Natural killer cell (primary cell): ENCODE measurements at regions of chr10 and their contacts with region 1.

Region 1: DNA sequence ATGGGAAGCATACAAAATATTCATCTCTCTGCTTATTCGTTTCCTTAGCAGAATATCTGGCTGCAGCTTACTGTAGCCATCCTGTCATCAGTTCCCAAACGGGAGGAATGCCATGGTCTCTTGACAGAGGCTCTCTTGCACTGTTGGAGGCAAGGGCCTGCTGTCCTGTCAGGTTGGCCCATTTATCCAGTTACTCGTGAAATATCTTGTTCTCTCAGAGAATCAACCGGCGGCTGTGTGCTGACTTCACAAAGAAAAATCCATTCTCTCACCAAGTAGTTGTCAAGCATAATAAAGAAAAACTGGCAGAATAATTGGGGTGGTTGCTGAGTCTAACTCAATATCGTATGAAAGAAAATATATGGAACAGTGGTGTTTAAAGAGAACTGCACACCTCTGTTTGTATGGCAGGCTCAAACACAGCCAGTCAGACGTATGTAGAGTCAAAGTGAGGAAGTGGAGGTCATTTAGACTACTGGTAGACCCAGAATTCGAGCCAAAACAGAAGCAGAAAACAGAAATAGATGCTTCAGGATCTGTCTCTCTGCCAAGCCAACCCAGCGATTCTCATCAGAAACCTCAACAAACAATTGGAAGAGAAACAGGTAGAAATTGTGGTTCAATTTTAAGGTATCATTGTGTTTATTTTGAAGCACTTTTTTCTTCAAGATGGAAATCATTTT is 349.2 kb upstream of the PRKCQ start:
- DNase-seq: peak in 1 of 2 donors; percentile 45
- ATAC-seq: no peak
- H3K4me3 ChIP-seq: no peak overlapping the region
- H3K4me3 Mint-ChIP-seq: peak overlapping the region; percentile 87
- H3K27ac ChIP-seq: peak overlapping the region; percentile 91
- H3K27ac Mint-ChIP-seq: peak overlapping the region; percentile 96 to 98
- H3K4me1 ChIP-seq: peaks cover 37% of the 10 kb centered on the region
- H3K4me1 Mint-ChIP-seq: peaks cover 54 to 64% of the 10 kb centered on the region in 2 donors
- H3K27me3 ChIP-seq: no peaks in the 10 kb centered on the region
- H3K27me3 Mint-ChIP-seq: no peaks in the 10 kb centered on the region
- CTCF ChIP-seq: no peak

Region 2: GRCh38 chr10:6973899-6974298 is 44.6 kb after region 1 on chr10:
- intact Hi-C with region 1: loop called (anchors 5 kb)
- DNase-seq: peak; percentile 24 to 59
- ATAC-seq: peak; percentile 89 to 97 (median 89)
- H3K4me3 ChIP-seq: no peak overlapping the region
- H3K4me3 Mint-ChIP-seq: peak overlapping the region; percentile 66
- H3K27ac ChIP-seq: peak overlapping the region; percentile 39
- H3K27ac Mint-ChIP-seq: peak overlapping the region; percentile 70 to 72
- H3K4me1 ChIP-seq: peaks cover 13% of the 10 kb centered on the region
- H3K4me1 Mint-ChIP-seq: peaks cover 47 to 57% of the 10 kb centered on the region in 2 donors
- H3K27me3 ChIP-seq: no peaks in the 10 kb centered on the region
- H3K27me3 Mint-ChIP-seq: no peaks in the 10 kb centered on the region
- CTCF ChIP-seq: no peak

Region 3: GRCh38 chr10:7027913-7028808 is 98.9 kb after region 1 on chr10:
- intact Hi-C with region 1: loop called (anchors 1 kb)
- DNase-seq: peak in 1 of 2 donors; percentile 32
- ATAC-seq: peak in 2 of 3 donors; percentile 15 to 48
- H3K4me3 ChIP-seq: no peak overlapping the region
- H3K4me3 Mint-ChIP-seq: peak overlapping the region; percentile 90
- H3K27ac ChIP-seq: peak overlapping the region; percentile 93
- H3K27ac Mint-ChIP-seq: peak overlapping the region; percentile 93
- H3K4me1 ChIP-seq: peaks cover 50% of the 10 kb centered on the region
- H3K4me1 Mint-ChIP-seq: peaks cover 75 to 80% of the 10 kb centered on the region in 2 donors
- H3K27me3 ChIP-seq: no peaks in the 10 kb centered on the region
- H3K27me3 Mint-ChIP-seq: no peaks in the 10 kb centered on the region
- CTCF ChIP-seq: no peak

Region 4: GRCh38 chr10:7045891-7046599 is 116.8 kb after region 1 on chr10:
- intact Hi-C with region 1: loop called (anchors 1 kb)
- DNase-seq: peak; percentile 29 to 68
- ATAC-seq: peak; percentile 70 to 87 (median 86)
- H3K4me3 ChIP-seq: no peak overlapping the region
- H3K4me3 Mint-ChIP-seq: peak overlapping the region; percentile 62
- H3K27ac ChIP-seq: peak overlapping the region; percentile 71
- H3K27ac Mint-ChIP-seq: peak overlapping the region; percentile 83 to 85
- H3K4me1 ChIP-seq: peaks cover 74% of the 10 kb centered on the region
- H3K4me1 Mint-ChIP-seq: peaks cover 75 to 76% of the 10 kb centered on the region in 2 donors
- H3K27me3 ChIP-seq: no peaks in the 10 kb centered on the region
- H3K27me3 Mint-ChIP-seq: no peaks in the 10 kb centered on the region
- CTCF ChIP-seq: no peak

Region 5: DNA sequence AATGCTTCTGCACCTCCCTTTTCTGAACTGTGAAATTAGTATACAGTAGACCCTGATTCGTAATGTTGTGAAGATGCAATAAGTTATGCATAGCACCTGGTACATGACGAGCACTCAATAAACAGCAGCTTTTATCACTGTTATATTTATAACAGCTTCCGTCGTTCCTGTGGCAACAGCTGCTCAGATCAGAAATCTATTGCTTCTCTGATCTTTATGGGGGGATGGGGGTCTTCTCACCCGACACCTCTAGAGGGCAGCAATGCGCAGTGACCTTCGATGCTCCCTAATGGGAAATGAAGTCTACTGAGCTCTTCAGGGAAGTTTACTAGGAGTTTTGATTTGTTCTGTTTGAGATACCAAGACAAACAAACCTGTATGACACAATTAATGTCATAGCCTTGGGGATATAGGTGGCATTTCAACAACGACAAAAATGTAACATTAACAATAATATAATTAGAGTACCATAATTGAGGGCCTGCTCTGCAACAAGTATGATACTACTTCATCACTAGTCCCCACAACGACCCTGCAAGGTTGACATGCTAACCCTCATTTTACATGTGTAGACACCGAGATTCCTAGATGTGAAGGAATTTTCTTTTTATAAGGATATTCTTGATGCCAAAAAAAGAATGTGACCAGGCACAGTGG is 192.0 kb after region 1 on chr10:
- intact Hi-C with region 1: loop called (anchors 1 kb)
- DNase-seq: peak; percentile 63 to 88
- ATAC-seq: peak; percentile 89 to 96 (median 91)
- H3K4me3 ChIP-seq: no peak overlapping the region
- H3K4me3 Mint-ChIP-seq: peak overlapping the region; percentile 18
- H3K27ac ChIP-seq: no peak overlapping the region
- H3K27ac Mint-ChIP-seq: peak overlapping the region; percentile 66 to 71
- H3K4me1 ChIP-seq: peaks cover 8% of the 10 kb centered on the region
- H3K4me1 Mint-ChIP-seq: peaks cover 7 to 8% of the 10 kb centered on the region in 2 donors
- H3K27me3 ChIP-seq: no peaks in the 10 kb centered on the region
- H3K27me3 Mint-ChIP-seq: no peaks in the 10 kb centered on the region
- CTCF ChIP-seq: peak; percentile 68

Region 6: DNA sequence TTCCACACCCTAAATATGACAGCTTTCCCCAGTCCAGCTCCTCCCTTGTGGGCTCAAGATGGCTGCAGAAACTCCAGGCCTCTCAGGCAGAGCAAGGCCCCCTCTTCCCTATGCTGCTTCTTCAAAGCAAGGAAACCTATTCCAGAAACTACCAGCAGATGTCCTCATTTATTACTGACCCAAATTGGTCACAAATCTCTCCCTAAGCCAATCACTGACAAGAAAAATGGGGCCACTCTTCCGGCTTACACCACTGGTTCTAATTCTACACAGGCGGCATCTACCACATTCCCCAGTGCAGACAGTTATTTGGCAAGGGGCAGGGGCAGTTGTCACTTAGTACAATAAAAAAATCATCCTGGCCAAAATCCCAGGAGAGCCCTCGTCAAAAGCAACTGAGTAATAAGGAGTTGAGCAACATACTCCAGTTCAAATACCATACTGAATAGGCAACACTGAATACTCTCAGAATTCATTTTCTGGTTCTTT is 331.2 kb after region 1 on chr10:
- intact Hi-C with region 1: loop called (anchors 5 kb)
- DNase-seq: peak in 1 of 2 donors; percentile 72
- ATAC-seq: peak; percentile 54 to 73 (median 70)
- H3K4me3 ChIP-seq: no peak overlapping the region
- H3K4me3 Mint-ChIP-seq: peak overlapping the region; percentile 79
- H3K27ac ChIP-seq: no peak overlapping the region
- H3K27ac Mint-ChIP-seq: peak overlapping the region; percentile 86 to 91
- H3K4me1 ChIP-seq: peaks cover 44% of the 10 kb centered on the region
- H3K4me1 Mint-ChIP-seq: peaks cover 55 to 58% of the 10 kb centered on the region in 2 donors
- H3K27me3 ChIP-seq: no peaks in the 10 kb centered on the region
- H3K27me3 Mint-ChIP-seq: no peaks in the 10 kb centered on the region
- CTCF ChIP-seq: peak; percentile 54